Right ventricle myocardium inferior (tissue), 1 donor: ENCODE measurements at regions of chr3 and their contacts with region 1.

Region 1: DNA sequence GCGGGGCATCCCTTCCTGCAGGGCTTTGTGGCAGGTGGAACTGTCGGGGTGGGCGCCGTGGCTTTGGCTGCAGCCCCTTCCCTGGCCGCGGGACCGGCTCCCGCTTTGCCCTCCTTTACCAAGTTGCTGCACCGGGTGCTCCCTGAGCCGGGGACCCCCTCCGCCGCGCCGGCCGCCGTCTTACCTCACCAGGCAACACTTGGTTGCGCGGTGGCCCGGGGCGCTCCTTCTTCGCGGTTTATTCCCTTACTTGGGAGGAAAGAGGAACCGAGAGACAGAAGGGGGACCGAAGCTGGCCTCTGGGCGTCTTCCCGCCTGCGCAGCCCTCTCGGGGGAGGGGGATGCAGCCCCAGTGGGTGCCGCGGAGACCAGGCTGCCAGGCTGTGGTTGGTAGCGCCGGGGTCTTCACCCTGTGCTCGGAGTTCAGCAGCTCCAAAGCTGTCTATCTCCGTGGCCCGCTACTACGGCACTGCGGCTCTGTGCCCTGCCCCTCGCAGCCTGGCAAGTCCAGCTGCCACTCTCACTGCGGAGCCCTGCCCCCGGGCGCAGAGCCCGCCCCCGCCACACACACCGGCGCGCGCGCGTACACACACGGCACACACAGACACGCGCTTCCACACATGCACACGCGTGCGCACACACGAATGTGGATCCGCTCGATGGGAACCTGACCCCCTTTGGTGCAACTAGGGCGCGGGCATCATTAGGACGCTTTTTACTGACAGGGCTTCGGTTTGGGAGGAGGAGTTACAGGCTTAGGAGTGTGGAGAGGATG is at the start of gene DGKG:
- DNase-seq: peak; percentile 90
- ATAC-seq: peak; percentile 74
- total RNA-seq, gene DGKG: 31.1 TPM

Region 2: DNA sequence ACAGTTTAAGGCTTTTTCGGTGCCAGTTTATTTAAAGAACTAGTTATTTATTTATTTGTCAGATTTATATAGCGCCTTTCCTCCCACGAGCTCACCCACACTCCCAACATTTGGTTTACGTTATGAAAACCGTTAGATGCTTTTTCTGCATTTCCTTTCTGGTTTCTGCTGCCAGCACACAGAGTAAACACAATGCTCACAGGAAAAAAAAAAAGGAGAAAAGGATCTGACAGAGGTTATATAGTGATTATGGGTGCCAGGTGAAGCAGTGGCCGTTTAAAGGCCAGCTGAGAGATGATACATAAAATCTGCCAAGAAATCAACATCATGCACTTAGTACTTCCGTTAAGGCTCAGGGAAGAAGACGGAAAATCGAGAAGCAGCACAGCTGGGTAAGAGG is 291.0 kb before region 1 on chr3:
- intact Hi-C with region 1: no loop called
- DNase-seq: no peak
- ATAC-seq: no peak

Region 3: GRCh38 chr3:186315581-186316354 is 46.2 kb before region 1 on chr3:
- intact Hi-C with region 1: loop called (anchors 2 kb)
- DNase-seq: no peak
- ATAC-seq: no peak

Region 4: DNA sequence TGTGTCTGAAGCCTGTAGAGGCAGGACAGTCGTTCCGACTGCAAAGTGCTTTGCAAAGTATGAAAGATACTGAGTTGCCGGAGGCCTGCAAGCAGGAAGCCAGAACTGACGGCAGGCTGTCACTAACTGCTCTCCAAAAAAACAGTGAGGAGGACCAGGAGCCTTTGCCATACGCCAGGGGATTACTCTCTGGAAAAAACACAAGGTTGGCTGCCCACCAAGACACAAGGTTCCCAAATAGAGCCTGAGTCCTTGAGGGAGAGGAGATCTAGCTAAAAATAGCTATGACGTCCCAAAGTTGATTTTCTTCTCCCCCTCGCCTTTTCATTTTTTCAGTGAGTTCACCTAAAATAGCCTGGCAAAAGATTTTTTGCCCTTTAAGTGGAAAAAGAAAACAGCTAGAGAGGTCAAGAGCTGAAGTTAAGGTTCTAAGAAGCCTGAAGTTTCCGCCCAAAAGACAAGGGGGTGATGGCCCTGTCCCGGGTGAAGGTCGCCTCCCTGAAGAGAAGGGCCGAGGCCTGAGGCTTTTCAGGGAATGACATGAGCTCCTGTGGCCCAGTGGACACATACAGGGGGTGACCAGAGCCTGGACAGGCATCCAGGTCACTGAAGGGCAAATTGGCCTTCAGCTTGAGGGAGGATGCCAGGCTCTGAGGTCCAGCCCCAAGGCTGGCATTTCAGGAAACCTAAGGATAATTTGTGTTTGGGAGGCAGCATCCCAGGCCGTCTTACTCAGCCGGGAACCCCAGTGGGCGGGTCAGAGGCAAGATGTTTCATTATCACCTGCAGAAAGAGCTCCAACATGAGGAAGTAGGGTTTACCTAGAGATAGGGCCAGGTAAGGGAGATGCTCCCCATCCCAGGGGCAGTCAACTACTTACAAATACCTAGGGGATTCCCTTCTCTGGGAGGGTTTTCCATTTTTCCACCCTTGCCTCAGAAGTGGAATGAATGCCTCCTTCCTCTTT is 45.0 kb after region 1 on chr3:
- intact Hi-C with region 1: loop called (anchors 1 kb)
- DNase-seq: no peak
- ATAC-seq: peak; percentile 92

Region 5: GRCh38 chr3:186425788-186426730 is 64.1 kb after region 1 on chr3:
- intact Hi-C with region 1: loop called (anchors 5 kb)
- DNase-seq: no peak
- ATAC-seq: peak; percentile 28

Region 6: GRCh38 chr3:186442162-186442561 is 80.2 kb after region 1 on chr3:
- intact Hi-C with region 1: loop called (anchors 5 kb)
- DNase-seq: no peak
- ATAC-seq: peak; percentile 92